ENCODE measurements at regions of chr1 and their contacts with region 1.

Region 1: GRCh38 chr1:12549460-12550349 is 68.3 kb downstream of the DHRS3 start:
- DNase-seq: peak; percentile 84 to 90 (median 87)
- H3K4me3 ChIP-seq: peak overlapping the region; percentile 13
- H3K27ac ChIP-seq: peak overlapping the region; percentile 71 to 77
- H3K4me1 ChIP-seq: peaks cover 24% of the 10 kb centered on the region
- H3K27me3 ChIP-seq: no peaks in the 10 kb centered on the region
- CTCF ChIP-seq: no peak
- EP300 ChIP-seq: peak; percentile 38
- POLR2A ChIP-seq: no peak

Region 2: DNA sequence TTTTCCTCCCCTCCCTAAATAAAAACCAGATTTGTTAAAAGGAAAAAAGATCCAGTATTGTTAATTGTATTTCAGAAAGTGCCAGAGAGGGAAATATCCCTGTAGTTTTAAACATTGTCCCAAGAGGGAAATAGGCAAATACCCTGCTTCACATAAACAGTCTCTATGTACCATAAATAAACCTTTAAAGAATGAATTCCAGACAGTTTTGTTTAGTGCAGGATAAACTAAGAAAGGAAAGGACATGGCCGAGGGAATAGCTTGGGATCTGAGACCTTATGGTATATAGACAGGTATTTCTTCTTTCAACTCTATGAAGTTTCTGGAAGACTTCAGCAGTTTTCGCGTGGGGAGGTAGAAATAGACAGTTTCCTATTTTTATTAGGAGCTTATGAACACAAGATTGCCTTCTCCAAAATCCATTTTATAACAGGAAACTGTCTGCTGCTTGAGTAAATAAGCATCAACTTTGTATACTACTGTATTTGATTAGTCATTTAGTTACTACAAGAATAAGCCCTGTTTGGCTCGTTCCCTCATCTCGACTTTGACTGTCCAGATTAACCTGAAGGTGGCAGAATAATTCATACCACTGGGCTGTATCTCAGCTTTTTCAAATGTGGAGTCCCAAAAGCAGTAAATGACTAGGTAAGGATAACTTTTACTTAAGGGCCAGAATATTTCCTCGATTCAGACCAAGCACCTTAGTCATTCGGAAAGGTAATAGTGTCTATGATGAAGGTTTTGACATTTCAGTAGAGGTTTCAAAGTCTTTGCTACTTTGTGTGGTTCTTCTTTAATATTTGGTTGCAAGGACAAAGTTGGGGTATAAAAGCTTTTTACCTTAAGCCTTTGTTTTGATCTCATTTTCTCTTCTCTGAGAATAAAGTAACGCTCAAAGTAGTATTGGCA is 142.4 kb before region 1 on chr1:
- intact Hi-C with region 1: loop called in 1 of 4 experiments (anchors 10 kb)
- DNase-seq: peak in 1 of 5 donors; percentile 31
- H3K4me3 ChIP-seq: no peak overlapping the region
- H3K27ac ChIP-seq: no peak overlapping the region
- H3K4me1 ChIP-seq: peaks cover 5% of the 10 kb centered on the region
- H3K27me3 ChIP-seq: no peaks in the 10 kb centered on the region
- CTCF ChIP-seq: peak in 2 of 3 donors; percentile 9 to 47
- EP300 ChIP-seq: no peak
- POLR2A ChIP-seq: no peak

Region 3: DNA sequence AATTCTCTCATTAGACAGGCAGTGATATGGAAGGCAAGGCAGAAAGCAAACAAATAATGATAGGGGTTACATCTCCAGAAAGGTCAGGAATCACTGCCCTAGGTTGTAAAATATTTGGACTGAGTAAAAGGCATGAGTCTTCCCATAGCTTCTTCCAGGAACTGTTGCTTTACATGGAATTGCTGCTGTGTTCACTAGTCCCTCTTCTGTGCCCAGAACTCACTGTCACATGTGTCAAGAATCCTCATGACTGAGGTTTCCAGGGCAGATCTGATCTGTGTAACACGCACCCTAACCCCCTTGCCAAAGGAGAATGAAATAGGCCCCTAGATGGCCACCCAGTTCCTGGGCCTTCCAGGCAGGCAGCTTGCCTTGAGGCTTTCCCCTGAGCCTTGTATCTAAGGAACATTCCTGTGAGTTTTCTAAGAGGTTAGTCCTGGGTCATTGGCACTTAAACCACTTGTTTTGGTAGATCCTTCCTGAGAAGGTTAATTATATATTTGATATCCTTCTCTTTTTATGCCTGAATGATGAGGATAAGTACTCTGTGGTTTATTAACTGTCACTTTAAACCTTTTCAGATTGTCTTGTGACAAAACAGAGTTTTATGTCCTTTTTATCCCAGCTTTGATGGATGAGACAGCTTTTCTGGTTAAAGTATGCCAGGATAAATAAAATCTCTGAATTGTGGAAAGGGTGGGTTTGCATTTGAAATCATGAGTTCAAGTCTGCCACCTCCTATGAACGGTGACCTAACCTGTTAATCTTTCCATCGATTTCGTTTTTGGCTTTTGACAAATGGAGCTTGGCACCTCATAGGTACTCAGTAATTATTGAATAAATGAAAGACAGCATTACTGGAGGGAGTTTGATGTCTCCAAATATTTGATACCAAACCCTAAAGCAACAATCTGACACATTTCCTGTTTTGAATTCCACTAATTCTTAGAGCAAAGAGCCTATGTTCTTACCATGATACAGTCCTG is 95.0 kb before region 1 on chr1:
- intact Hi-C with region 1: loop called in 1 of 4 experiments (anchors 10 kb)
- DNase-seq: no peak
- H3K4me3 ChIP-seq: no peak overlapping the region
- H3K27ac ChIP-seq: peak overlapping the region in 1 of 2 donors; percentile 51
- H3K4me1 ChIP-seq: peaks cover 23% of the 10 kb centered on the region
- H3K27me3 ChIP-seq: no peaks in the 10 kb centered on the region
- CTCF ChIP-seq: no peak
- EP300 ChIP-seq: peak; percentile 58
- POLR2A ChIP-seq: no peak

Region 4: GRCh38 chr1:12477936-12478611 is 71.6 kb before region 1 on chr1:
- intact Hi-C with region 1: loop called in 2 of 4 experiments (anchors 10 kb)
- DNase-seq: peak; percentile 80 to 95 (median 93)
- H3K4me3 ChIP-seq: no peak overlapping the region
- H3K27ac ChIP-seq: peak overlapping the region in 1 of 2 donors; percentile 83
- H3K4me1 ChIP-seq: peaks cover 21% of the 10 kb centered on the region
- H3K27me3 ChIP-seq: no peaks in the 10 kb centered on the region
- CTCF ChIP-seq: no peak
- EP300 ChIP-seq: no peak
- POLR2A ChIP-seq: no peak

Region 5: GRCh38 chr1:12596007-12596821 is 46.5 kb after region 1 on chr1:
- intact Hi-C with region 1: loop called in 2 of 4 experiments (anchors 5 to 10 kb)
- DNase-seq: peak; percentile 85 to 92 (median 86)
- H3K4me3 ChIP-seq: peak overlapping the region; percentile 21
- H3K27ac ChIP-seq: peak overlapping the region; percentile 15 to 93
- H3K4me1 ChIP-seq: peaks cover 38% of the 10 kb centered on the region
- H3K27me3 ChIP-seq: no peaks in the 10 kb centered on the region
- CTCF ChIP-seq: no peak
- EP300 ChIP-seq: no peak
- POLR2A ChIP-seq: no peak

Region 6: DNA sequence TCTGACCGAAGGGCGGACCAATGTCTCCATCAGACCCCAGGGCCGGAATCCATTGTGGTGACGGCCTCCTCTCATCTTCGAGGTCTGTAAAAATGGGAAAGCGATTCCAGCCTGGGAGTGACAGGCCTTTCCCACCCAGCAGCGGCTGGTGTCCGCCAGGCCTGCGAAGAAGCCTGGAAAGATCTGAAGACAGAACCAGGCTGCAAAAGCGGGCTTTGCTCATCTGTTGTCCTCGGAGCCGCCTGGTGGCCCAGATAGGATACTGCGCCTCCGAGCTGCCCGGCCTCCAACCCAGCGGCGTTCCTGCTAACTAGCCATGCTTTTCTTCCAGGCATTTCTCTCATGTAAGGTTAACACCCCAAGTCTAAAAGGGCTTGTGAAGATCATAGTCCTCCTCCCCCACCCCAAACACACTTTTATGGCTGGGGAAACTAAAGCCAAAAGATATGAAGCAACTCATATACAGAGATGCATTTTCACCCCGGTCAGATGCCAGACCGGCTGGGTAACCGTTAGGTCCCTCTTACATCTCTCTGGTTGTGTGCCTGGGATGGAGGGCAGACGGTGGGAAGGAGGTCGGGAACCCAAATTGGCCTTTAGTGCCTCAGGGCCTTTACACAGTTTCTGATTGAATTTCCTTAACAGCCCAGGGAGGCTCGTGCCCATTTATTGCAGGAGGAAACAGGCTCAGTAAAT is 70.2 kb after region 1 on chr1:
- intact Hi-C with region 1: loop called in 3 of 4 experiments (anchors 5 to 10 kb)
- DNase-seq: peak; percentile 84 to 91 (median 90)
- H3K4me3 ChIP-seq: no peak overlapping the region
- H3K27ac ChIP-seq: peak overlapping the region; percentile 60 to 88
- H3K4me1 ChIP-seq: peaks cover 11% of the 10 kb centered on the region
- H3K27me3 ChIP-seq: no peaks in the 10 kb centered on the region
- CTCF ChIP-seq: peak; percentile 87 to 96 (median 91)
- EP300 ChIP-seq: no peak
- POLR2A ChIP-seq: no peak